K562 (cell line): ENCODE measurements at regions of chr2 and their contacts with region 1.

Region 1: GRCh38 chr2:23824777-23825212 is 102.1 kb downstream of the ATAD2B start:
- DNase-seq: peak; percentile 23 to 62 (median 34)
- ATAC-seq: peak; percentile 86
- H3K4me3 ChIP-seq: no peak overlapping the region
- H3K27ac ChIP-seq: no peak overlapping the region
- H3K4me1 ChIP-seq: no peaks in the 10 kb centered on the region
- H3K27me3 ChIP-seq: no peaks in the 10 kb centered on the region
- CTCF ChIP-seq: peak; percentile 54 to 80 (median 71); a peak in 5 of 6 replicates
- EP300 ChIP-seq: no peak
- POLR2A ChIP-seq: no peak
- RAD21 ChIP-seq: peak; percentile 46 to 66

Region 2: GRCh38 chr2:23460228-23460627 is 364.6 kb before region 1 on chr2:
- CTCF ChIA-PET with region 1: no interaction called
- POLR2A ChIA-PET with region 1: no interaction called
- in situ Hi-C with region 1: no loop called
- intact Hi-C with region 1: no loop called
- DNase-seq: peak in 1 of 4 experiments; percentile 13
- ATAC-seq: peak; percentile 54; the same call in 2 of the 3 replicates
- H3K4me3 ChIP-seq: no peak overlapping the region
- H3K27ac ChIP-seq: no peak overlapping the region
- H3K4me1 ChIP-seq: no peaks in the 10 kb centered on the region
- H3K27me3 ChIP-seq: peaks cover 2 to 23% of the 10 kb centered on the region in 2 experiments; a peak in 3 of 5 replicates
- CTCF ChIP-seq: peak; percentile 16 to 50 (median 45); a peak in 3 of 6 replicates
- EP300 ChIP-seq: no peak
- POLR2A ChIP-seq: no peak
- RAD21 ChIP-seq: peak; percentile 62 to 65

Region 3: GRCh38 chr2:23809150-23809549 is 15.6 kb before region 1 on chr2:
- CTCF ChIA-PET with region 1: no interaction called
- POLR2A ChIA-PET with region 1: no interaction called
- in situ Hi-C with region 1: no loop called
- intact Hi-C with region 1: no loop called
- DNase-seq: no peak
- ATAC-seq: no peak
- H3K4me3 ChIP-seq: no peak overlapping the region
- H3K27ac ChIP-seq: no peak overlapping the region
- H3K4me1 ChIP-seq: peaks cover 0 to 3% of the 10 kb centered on the region in 2 experiments; a peak in 1 of 5 replicates
- H3K27me3 ChIP-seq: no peaks in the 10 kb centered on the region
- CTCF ChIP-seq: no peak
- EP300 ChIP-seq: no peak
- POLR2A ChIP-seq: no peak
- RAD21 ChIP-seq: no peak

Region 4: GRCh38 chr2:24015562-24016346 is 191.0 kb after region 1 on chr2:
- CTCF ChIA-PET with region 1: no interaction called
- POLR2A ChIA-PET with region 1: no interaction called
- in situ Hi-C with region 1: no loop called
- intact Hi-C with region 1: loop called (anchors 10 kb)
- DNase-seq: no peak
- ATAC-seq: peak; percentile 9
- H3K4me3 ChIP-seq: no peak overlapping the region
- H3K27ac ChIP-seq: peak overlapping the region; percentile 27; the same call in 2 of the 3 replicates
- H3K4me1 ChIP-seq: peaks cover 30 to 43% of the 10 kb centered on the region in 2 experiments
- H3K27me3 ChIP-seq: no peaks in the 10 kb centered on the region
- CTCF ChIP-seq: no peak
- EP300 ChIP-seq: no peak
- POLR2A ChIP-seq: no peak
- RAD21 ChIP-seq: no peak

Region 5: DNA sequence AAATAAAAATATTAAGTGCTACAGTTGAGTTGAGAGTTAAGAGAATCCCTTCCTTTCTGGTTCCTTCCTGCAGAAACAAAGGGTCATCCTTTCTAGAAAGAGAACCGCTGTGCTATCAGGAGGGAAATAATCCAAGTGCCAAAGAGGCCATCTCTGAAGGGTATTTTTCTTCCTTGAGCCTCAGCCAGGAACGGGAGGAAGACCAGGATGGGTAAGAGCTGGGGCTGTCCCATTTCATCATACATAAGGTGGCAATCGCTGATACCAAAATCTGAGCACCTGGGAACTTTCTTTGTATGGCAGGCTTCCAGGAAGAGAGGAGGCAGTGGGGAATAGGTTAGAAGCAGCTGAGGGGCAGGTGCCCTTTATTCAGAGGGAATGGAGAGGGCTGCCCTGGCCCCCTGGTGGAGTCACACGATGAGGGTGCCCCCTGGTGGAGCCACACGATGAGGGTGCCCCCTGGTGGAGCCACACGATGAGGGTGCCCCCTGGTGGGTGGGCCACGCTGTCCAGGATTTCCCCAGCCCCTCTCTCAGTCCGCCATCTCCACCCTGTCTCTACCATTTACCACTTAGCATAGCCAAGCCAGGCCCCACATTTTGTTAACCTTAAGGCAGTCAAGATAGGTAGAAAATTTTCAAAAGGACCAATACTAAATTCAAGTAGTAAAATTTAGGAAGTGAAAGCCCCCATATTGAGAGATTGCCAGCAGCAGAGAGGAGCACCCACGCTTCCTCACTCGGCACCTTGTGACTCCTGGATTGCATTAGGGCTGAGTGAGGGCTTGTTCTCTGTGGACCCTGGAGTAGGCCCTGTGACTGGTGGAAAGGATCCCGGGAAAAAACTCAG is 339.6 kb after region 1 on chr2:
- CTCF ChIA-PET with region 1: interaction called, 3 read pairs
- POLR2A ChIA-PET with region 1: no interaction called
- in situ Hi-C with region 1: no loop called
- intact Hi-C with region 1: loop called (anchors 2 kb)
- DNase-seq: peak; percentile 58 to 78 (median 69)
- ATAC-seq: peak; percentile 97
- H3K4me3 ChIP-seq: no peak overlapping the region
- H3K27ac ChIP-seq: no peak overlapping the region
- H3K4me1 ChIP-seq: peaks cover 0 to 4% of the 10 kb centered on the region in 2 experiments; a peak in 1 of 5 replicates
- H3K27me3 ChIP-seq: peaks cover 2 to 16% of the 10 kb centered on the region in 2 experiments; a peak in 1 of 5 replicates
- CTCF ChIP-seq: peak; percentile 98 to 99 (median 99)
- EP300 ChIP-seq: no peak; the same call in 1 of the 2 replicates
- POLR2A ChIP-seq: no peak
- RAD21 ChIP-seq: peak; percentile 72 to 91